K562 (cell line): ENCODE measurements at regions of chr7 and their contacts with region 1.

Region 1: GRCh38 chr7:518630-519483 is 789 bp downstream of the PDGFA start:
- DNase-seq: peak; percentile 73 to 80 (median 76)
- ATAC-seq: peak; percentile 43
- H3K4me3 ChIP-seq: peak overlapping the region; percentile 48
- H3K27ac ChIP-seq: no peak overlapping the region
- H3K4me1 ChIP-seq: peaks cover 9 to 71% of the 10 kb centered on the region in 2 experiments
- H3K27me3 ChIP-seq: peaks cover 0 to 12% of the 10 kb centered on the region in 2 experiments; a peak in 2 of 5 replicates
- CTCF ChIP-seq: 0 out of 6 replicates have a peak, but pooled peaks of 1 of the 3 experiments have one; percentile 1
- EP300 ChIP-seq: no peak
- POLR2A ChIP-seq: no peak
- RAD21 ChIP-seq: no peak

Region 2: GRCh38 chr7:142248-142941 is 376.5 kb before region 1 on chr7:
- CTCF ChIA-PET with region 1: no interaction called
- POLR2A ChIA-PET with region 1: no interaction called
- in situ Hi-C with region 1: no loop called
- intact Hi-C with region 1: no loop called
- DNase-seq: no peak
- ATAC-seq: peak; percentile 42; the same call in 2 of the 3 replicates
- H3K4me3 ChIP-seq: no peak overlapping the region
- H3K27ac ChIP-seq: no peak overlapping the region
- H3K4me1 ChIP-seq: peaks cover 0 to 8% of the 10 kb centered on the region in 2 experiments; a peak in 2 of 5 replicates
- H3K27me3 ChIP-seq: peaks cover 51 to 69% of the 10 kb centered on the region in 2 experiments
- CTCF ChIP-seq: no peak
- EP300 ChIP-seq: no peak
- POLR2A ChIP-seq: no peak
- RAD21 ChIP-seq: no peak

Region 3: DNA sequence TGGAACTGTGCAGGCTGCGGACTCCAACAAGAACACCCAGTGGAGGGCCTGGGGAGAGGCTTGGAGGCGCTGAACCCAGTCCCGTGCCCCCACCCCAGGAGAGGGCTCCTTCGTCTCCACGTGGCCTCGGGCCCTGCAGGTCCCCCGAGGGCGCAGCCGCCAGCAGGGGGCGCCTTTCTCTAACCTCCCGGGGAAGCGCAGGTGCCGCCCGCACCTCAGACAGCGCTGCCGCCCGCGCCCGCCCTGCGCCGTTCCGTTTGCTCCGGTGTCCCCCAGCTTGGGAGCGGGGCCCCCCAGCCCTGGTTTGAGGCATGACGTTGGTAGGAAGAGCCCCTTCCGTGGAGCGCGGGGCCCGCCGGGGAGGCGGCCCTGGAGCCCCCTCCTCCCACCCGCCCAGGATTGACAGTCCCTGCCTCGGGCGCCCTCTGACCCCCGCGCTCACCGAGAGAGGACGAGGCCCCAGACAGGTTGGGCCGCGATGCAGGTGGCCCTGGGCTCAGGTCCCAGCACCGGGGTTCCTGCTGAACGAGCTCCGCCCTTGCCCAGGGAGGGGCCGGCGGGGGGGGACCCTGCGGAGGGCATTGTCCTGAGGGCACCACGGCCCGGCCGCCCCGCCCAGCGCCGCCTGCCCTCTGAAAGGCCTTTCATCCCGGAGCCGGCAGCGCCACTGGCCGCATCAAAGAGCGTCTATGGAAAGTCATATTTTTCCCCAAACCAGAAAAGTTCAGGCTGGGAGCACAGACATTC is 186.0 kb before region 1 on chr7:
- CTCF ChIA-PET with region 1: interaction called, 3 read pairs
- POLR2A ChIA-PET with region 1: no interaction called
- in situ Hi-C with region 1: loop called (anchors 5 kb)
- intact Hi-C with region 1: no loop called
- DNase-seq: peak; percentile 83 to 88 (median 88)
- ATAC-seq: peak; percentile 100
- H3K4me3 ChIP-seq: no peak overlapping the region
- H3K27ac ChIP-seq: no peak overlapping the region
- H3K4me1 ChIP-seq: peaks cover 0 to 17% of the 10 kb centered on the region in 2 experiments; a peak in 2 of 5 replicates
- H3K27me3 ChIP-seq: peaks cover 28 to 46% of the 10 kb centered on the region in 2 experiments
- CTCF ChIP-seq: peak; percentile 81 to 94 (median 85)
- EP300 ChIP-seq: no peak
- POLR2A ChIP-seq: no peak
- RAD21 ChIP-seq: peak; percentile 76 to 92

Region 4: GRCh38 chr7:568031-568951 is 49.4 kb after region 1 on chr7:
- CTCF ChIA-PET with region 1: no interaction called
- POLR2A ChIA-PET with region 1: no interaction called
- in situ Hi-C with region 1: no loop called
- intact Hi-C with region 1: no loop called
- DNase-seq: no peak
- ATAC-seq: no peak
- H3K4me3 ChIP-seq: no peak overlapping the region
- H3K27ac ChIP-seq: no peak overlapping the region
- H3K4me1 ChIP-seq: peaks cover 0 to 26% of the 10 kb centered on the region in 2 experiments; a peak in 1 of 5 replicates
- H3K27me3 ChIP-seq: no peaks in the 10 kb centered on the region
- CTCF ChIP-seq: no peak
- EP300 ChIP-seq: no peak
- POLR2A ChIP-seq: no peak
- RAD21 ChIP-seq: no peak

Region 5: GRCh38 chr7:604001-604883 is 85.4 kb after region 1 on chr7:
- CTCF ChIA-PET with region 1: no interaction called
- POLR2A ChIA-PET with region 1: no interaction called
- in situ Hi-C with region 1: no loop called
- intact Hi-C with region 1: loop called (anchors 5 kb)
- DNase-seq: peak; percentile 74 to 96 (median 80)
- ATAC-seq: peak; percentile 87
- H3K4me3 ChIP-seq: peak overlapping the region; percentile 41
- H3K27ac ChIP-seq: peak overlapping the region; percentile 100
- H3K4me1 ChIP-seq: peaks cover 47 to 70% of the 10 kb centered on the region in 2 experiments
- H3K27me3 ChIP-seq: no peaks in the 10 kb centered on the region
- CTCF ChIP-seq: 0 out of 6 replicates have a peak, but pooled peaks of 1 of the 3 experiments have one; percentile 7
- EP300 ChIP-seq: peak; percentile 89
- POLR2A ChIP-seq: peak; percentile 86
- RAD21 ChIP-seq: 0 out of 4 replicates have a peak, but pooled peaks of 1 of the 2 experiments have one; percentile 16

Region 6: GRCh38 chr7:636396-636795 is 117.5 kb after region 1 on chr7:
- CTCF ChIA-PET with region 1: no interaction called
- POLR2A ChIA-PET with region 1: no interaction called
- in situ Hi-C with region 1: no loop called
- intact Hi-C with region 1: loop called (anchors 5 kb)
- DNase-seq: peak; percentile 68 to 80 (median 74)
- ATAC-seq: peak; percentile 97
- H3K4me3 ChIP-seq: peak overlapping the region; percentile 39
- H3K27ac ChIP-seq: peak overlapping the region; percentile 52; the same call in 2 of the 3 replicates
- H3K4me1 ChIP-seq: peaks cover 4 to 35% of the 10 kb centered on the region in 2 experiments; a peak in 4 of 5 replicates
- H3K27me3 ChIP-seq: no peaks in the 10 kb centered on the region
- CTCF ChIP-seq: peak; percentile 77 to 88 (median 81)
- EP300 ChIP-seq: no peak
- POLR2A ChIP-seq: no peak
- RAD21 ChIP-seq: peak; percentile 93 to 95